Endothelial cell of umbilical vein (primary cell): ENCODE measurements at regions of chr2 and their contacts with region 1.

Region 1: DNA sequence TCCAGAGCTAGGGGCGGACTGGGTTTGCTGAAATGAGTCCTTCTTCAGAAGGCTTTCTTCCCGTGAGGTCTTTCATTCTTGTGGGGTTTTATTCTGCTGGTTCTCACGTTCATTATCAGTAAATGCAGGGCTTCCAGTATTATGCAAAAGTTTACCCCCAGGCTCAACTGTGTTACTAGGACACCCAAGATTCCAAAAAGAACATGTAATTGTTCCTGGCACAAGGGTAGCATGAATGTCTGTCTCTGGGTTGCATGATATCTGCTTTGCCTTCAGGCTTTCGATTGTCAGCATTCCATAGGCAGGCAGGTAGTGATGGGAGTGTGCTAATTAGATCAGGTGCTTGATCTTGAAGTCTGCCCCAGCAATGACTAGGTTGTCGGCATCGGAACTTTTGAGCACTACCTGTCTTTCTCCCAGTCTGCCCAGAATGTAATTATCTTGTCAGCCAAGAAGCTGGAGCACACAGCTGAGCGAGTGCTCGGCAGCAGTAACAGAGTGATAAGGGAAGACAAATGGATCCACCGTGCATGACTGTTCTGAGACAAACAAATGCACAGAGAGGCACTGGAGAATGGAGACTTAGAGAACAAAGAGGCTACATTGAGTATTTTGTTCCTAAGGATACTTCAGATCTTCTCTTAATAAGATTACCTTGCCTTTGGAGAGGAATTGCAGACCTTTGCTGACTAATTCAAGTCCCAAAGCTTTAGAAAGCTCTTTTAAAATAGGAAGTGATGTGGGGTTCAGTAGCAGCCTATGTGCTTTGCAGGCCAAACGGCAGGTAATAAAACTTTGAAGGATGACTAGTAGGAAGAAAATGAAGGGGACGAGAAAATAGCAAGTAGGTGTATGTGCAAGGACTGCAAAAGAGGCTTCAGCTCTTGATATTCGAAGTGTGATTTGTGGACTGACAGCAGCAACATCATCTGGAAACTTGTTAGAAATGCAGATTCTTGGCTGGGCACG is 41.9 kb downstream of the ITGB6 start:
- DNase-seq: no peak
- H3K4me3 ChIP-seq: no peak overlapping the region
- H3K27ac ChIP-seq: no peak overlapping the region
- H3K4me1 ChIP-seq: peaks cover 18% of the 10 kb centered on the region
- H3K27me3 ChIP-seq: no peaks in the 10 kb centered on the region
- CTCF ChIP-seq: no peak
- POLR2A ChIP-seq: no peak

Region 2: DNA sequence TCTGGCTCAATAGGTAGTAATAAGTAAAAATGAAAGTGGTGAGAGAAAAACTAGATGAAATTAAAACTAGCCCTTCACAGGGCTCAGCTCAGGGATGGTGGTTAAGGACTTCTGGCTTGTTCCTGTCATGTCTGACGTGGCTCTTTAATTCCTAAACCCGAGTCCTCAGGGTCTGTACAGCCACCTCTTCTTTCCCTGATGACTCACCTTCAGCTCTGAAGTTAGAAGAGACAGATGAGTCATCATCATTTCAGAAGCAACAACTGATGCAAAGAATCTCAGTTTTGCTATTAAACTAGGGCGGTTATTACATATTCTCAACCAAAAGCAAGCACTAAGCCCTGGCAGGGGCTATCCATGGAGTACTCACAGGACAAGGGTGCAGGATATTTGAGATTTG is 65.9 kb after region 1 on chr2:
- CTCF ChIA-PET with region 1: interaction called, 3 read pairs
- POLR2A ChIA-PET with region 1: no interaction called
- dilution Hi-C with region 1: no loop called
- intact Hi-C with region 1: loop called (anchors 5 kb)
- DNase-seq: peak; percentile 87
- H3K4me3 ChIP-seq: peak overlapping the region in 1 of 3 experiments; percentile 41
- H3K27ac ChIP-seq: peak overlapping the region; percentile 95
- H3K4me1 ChIP-seq: peaks cover 80% of the 10 kb centered on the region
- H3K27me3 ChIP-seq: no peaks in the 10 kb centered on the region
- CTCF ChIP-seq: no peak
- POLR2A ChIP-seq: no peak

Region 3: GRCh38 chr2:160561551-160562295 is 403.6 kb after region 1 on chr2:
- CTCF ChIA-PET with region 1: no interaction called
- POLR2A ChIA-PET with region 1: no interaction called
- dilution Hi-C with region 1: no loop called
- intact Hi-C with region 1: no loop called
- DNase-seq: no peak
- H3K4me3 ChIP-seq: no peak overlapping the region
- H3K27ac ChIP-seq: no peak overlapping the region
- H3K4me1 ChIP-seq: no peaks in the 10 kb centered on the region
- H3K27me3 ChIP-seq: no peaks in the 10 kb centered on the region
- CTCF ChIP-seq: no peak
- POLR2A ChIP-seq: no peak